ENCODE measurements at regions of chr21 and their contacts with region 1.

Region 1: DNA sequence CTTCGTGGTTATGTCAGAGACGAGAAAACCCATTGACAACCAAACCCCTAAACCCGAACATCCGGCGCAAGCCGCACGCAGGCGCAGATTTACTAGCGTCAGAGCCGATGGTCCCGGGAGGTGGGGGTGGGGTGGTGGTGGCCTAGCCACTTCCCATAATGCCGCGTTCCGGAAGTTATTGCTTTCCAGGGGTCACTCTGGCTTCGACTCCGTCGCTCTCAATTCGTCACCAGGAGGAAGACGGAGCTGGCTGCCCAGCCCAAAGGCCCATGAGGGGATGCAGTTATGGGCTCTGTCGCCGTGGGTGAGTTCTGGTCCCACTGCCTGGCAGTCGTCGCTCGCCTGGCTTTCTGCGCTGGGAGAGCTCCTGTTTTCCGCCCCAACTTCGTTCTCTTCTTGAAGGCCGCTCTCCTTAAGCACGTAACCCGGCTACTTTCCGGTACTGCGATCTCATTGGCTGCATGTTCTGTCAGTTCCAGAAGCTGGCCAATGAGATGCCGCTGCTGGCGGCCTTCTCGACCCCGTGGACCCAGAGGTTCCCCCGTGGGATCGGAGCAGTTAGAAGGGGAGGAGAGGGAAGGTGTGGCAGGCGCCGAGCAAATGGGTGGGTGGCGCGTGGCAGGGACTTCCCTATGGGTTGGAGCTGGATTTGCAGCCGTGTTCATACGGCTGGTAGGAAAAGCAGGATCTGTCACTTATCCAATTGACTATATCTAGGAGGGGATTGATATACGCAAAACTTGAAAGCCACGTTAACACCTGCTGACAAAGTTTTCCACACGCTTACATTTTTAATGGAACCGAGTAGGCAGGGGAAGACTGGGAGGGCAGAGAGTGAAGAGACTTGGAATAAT is at the start of gene USP16:
- DNase-seq: peak; percentile 93
- ATAC-seq: peak; percentile 96
- H3K4me3 Mint-ChIP-seq: peak within 1 kb of the TSS; percentile 93
- H3K27ac Mint-ChIP-seq: peak within 1 kb of the TSS; percentile 98
- H3K4me1 Mint-ChIP-seq: peaks cover 42% of the 10 kb centered on the region
- H3K27me3 Mint-ChIP-seq: no peaks in the 10 kb centered on the region
- total RNA-seq, gene USP16: 39.5 to 40.9 TPM

Region 2: GRCh38 chr21:28992526-28993292 is 32.0 kb before region 1 on chr21 and contains the start of gene LTN1:
- POLR2A ChIA-PET with region 1: interaction called, 60 read pairs
- DNase-seq: peak; percentile 96
- ATAC-seq: peak; percentile 95
- H3K4me3 Mint-ChIP-seq: peak within 1 kb of the TSS; percentile 96
- H3K27ac Mint-ChIP-seq: peak within 1 kb of the TSS; percentile 95
- H3K4me1 Mint-ChIP-seq: peaks cover 27% of the 10 kb centered on the region
- H3K27me3 Mint-ChIP-seq: no peaks in the 10 kb centered on the region
- total RNA-seq, gene LTN1: 27.4 to 29.3 TPM

Region 3: GRCh38 chr21:29002442-29003144 is 22.1 kb before region 1 on chr21:
- POLR2A ChIA-PET with region 1: interaction called, 171 read pairs
- DNase-seq: peak; percentile 91
- ATAC-seq: peak; percentile 100
- H3K4me3 Mint-ChIP-seq: peak overlapping the region; percentile 86
- H3K27ac Mint-ChIP-seq: peak overlapping the region; percentile 95
- H3K4me1 Mint-ChIP-seq: peaks cover 7% of the 10 kb centered on the region
- H3K27me3 Mint-ChIP-seq: no peaks in the 10 kb centered on the region

Region 4: DNA sequence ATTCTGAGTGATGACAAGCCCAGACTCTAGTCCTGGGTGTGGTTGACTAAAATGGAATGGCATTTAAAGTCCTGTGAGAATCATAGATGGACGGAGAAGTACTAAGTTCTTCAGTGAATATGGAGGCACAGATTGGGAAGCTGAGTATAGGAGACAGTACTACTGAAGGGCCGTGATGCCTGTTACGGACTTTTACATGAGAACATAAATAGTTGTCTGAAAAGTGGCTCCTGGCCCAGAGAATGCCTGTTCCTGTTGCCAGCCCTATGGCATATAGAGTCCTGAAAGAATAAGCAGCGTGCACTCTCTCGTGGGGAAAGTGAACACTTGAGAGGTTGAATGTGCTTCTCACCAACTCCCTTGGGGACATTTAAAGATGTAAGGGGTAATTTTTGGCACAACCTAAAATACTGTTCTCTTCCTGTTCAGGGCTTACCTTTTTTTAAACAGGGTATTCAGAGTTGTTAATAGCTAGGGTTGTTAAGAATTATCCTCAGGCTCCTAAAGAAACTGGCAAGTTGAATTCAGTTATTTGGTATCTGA is 28.4 kb after region 1 on chr21:
- POLR2A ChIA-PET with region 1: no interaction called
- DNase-seq: no peak
- ATAC-seq: no peak
- H3K4me3 Mint-ChIP-seq: no peak overlapping the region
- H3K27ac Mint-ChIP-seq: no peak overlapping the region
- H3K4me1 Mint-ChIP-seq: peaks cover 3% of the 10 kb centered on the region
- H3K27me3 Mint-ChIP-seq: no peaks in the 10 kb centered on the region

Region 5: DNA sequence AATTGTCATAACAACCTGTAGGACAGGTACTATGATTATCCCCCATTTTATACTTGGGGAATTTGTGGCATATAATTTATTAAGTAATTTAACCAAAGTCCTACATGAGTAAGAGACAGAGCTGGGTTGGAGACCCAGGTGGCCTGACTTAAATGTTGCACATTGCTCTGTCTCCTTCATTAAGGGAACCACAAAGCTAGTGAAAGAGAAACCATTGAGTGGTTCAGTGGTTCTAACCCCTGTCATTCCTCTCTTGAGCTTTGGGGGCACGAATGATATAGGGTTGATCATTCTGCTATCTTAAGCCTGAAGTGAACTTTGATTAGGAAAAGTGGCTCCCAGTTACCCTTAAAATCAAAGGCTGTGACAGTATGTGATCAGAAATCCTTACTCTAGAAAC is 100.5 kb after region 1 on chr21:
- POLR2A ChIA-PET with region 1: no interaction called
- DNase-seq: no peak
- ATAC-seq: peak; percentile 71
- H3K4me3 Mint-ChIP-seq: no peak overlapping the region
- H3K27ac Mint-ChIP-seq: peak overlapping the region; percentile 30
- H3K4me1 Mint-ChIP-seq: peaks cover 13% of the 10 kb centered on the region
- H3K27me3 Mint-ChIP-seq: no peaks in the 10 kb centered on the region

Measured in activated naive CD8-positive, alpha-beta T cell treated with anti-CD3 and anti-CD28 coated beads, Interleukin-2, amount 10 ng/mL, durations not matched to agents 7 days and 5 days (primary cell).